ENCODE measurements at regions of chr3 and their contacts with region 1.

Region 1: DNA sequence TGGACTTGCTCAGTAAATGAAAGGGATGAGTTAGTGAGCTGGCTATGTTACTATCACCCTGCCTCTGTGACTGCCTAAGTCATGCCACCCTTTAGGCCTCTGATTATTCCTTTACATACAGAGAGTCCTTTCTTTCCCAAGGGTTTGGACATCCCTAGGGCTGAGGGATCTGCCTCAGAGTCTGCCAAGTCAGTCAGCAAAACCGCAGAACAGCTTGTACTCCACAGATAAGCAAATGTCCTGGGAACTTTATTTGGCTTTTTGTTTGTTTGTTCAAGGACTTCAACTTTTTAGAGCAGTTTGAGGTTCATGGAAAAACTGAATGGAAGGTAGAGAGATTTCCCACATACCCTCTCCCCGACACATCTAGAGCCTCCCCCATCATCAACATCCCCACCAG is 82.6 kb upstream of the TRIM42 start:
- DNase-seq: no peak
- H3K4me3 ChIP-seq: no peak overlapping the region
- H3K27ac ChIP-seq: no peak overlapping the region
- H3K4me1 ChIP-seq: no peaks in the 10 kb centered on the region
- H3K27me3 ChIP-seq: no peaks in the 10 kb centered on the region
- CTCF ChIP-seq: no peak
- POLR2A ChIP-seq: no peak

Region 2: DNA sequence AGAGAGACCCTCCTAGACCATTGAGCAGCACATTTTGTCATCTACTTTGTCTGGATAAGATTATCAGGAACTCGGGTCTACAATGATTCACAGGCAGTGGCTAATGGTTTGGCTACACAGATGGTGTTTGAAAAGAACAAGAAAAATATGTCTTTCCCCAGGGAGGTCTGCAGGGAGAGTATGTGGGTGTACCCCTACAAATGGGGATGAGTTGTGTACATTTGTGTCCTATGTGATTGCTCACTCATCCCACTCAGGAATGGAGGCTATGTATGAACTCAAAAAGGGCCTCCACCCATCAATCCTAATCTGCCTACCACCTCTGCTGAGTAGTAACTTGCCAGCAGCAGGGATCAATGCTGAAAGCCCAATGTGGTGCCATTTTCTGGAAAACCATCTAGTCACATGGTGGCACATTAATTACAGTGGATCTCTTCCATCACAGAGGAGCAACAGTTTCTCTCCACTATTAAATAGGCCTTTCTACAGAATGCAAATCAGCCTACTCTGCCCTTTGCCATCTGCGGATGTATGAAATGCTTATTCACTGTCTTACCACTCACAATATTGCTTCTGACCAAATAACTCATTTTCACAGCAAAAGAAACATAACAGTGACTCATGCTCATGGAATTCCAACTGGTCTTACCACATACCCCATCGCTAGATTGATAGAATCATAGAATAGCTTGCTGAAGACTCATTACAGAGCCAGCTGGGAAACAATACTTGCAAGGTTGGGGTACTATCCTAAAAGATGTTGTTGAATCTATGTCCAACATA is 34.3 kb after region 1 on chr3:
- intact Hi-C with region 1: no loop called
- DNase-seq: no peak
- H3K4me3 ChIP-seq: no peak overlapping the region
- H3K27ac ChIP-seq: no peak overlapping the region
- H3K4me1 ChIP-seq: no peaks in the 10 kb centered on the region
- H3K27me3 ChIP-seq: no peaks in the 10 kb centered on the region
- CTCF ChIP-seq: no peak
- POLR2A ChIP-seq: no peak

Region 3: DNA sequence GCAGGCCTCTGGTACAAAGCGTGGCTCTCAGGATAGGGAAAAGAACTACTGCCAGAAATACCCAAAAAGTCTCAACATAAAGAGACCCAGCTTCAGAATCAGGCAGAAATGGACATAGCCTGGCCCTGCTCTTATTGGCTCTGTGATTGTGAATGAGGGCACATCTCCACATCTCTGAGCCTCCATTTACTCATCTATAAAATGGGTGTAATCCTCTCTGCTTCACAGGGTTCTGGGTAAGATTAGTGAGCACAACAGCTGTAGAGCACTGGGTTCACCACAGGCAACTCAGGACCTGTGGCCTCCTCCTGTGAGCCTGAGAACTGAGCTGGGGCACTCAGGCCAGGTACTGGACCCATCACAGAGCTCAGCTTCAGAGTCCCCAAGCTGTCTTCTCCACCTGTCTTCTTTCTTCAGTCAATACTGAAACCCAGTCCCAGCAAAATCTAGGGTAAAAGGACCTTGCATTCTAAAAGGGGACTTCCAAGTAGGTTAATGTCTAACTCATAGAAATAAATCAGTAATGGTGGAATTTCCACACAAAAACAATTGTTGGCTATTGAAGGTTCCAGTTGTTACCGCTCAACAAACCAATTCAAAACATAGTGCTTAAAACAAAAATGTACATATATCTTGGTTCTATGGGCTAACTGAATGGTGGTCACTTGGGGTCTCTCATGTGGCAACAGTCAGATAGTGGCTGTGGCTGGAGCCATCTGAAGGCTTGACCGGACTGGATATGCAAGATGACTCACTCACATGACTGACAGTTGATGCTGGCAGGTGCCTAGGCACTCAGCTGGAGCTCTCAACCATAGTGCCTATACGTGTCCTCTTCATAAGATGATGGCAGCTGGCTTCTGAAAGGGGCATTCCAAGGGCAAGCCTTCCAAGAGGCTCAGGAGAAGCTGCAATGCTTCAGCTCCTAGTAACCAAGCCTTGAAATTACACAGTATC is 129.8 kb after region 1 on chr3:
- intact Hi-C with region 1: loop called (anchors 10 kb)
- DNase-seq: no peak
- H3K4me3 ChIP-seq: no peak overlapping the region
- H3K27ac ChIP-seq: no peak overlapping the region
- H3K4me1 ChIP-seq: peaks cover 9% of the 10 kb centered on the region
- H3K27me3 ChIP-seq: no peaks in the 10 kb centered on the region
- CTCF ChIP-seq: no peak
- POLR2A ChIP-seq: no peak

Measured in vagina (tissue), 2 donors.